ENCODE measurements at regions of chr16 and their contacts with region 1.

Region 1: GRCh38 chr16:46918861-46919792 is 35.0 kb downstream of the GPT2 start:
- DNase-seq: no peak
- H3K4me3 ChIP-seq: no peak overlapping the region
- H3K27ac ChIP-seq: no peak overlapping the region
- H3K4me1 ChIP-seq: no peaks in the 10 kb centered on the region
- H3K27me3 ChIP-seq: no peaks in the 10 kb centered on the region

Region 2: GRCh38 chr16:46929378-46930332 is 10.5 kb after region 1 on chr16:
- CTCF ChIA-PET with region 1: interaction called, 18 read pairs
- POLR2A ChIA-PET with region 1: no interaction called
- DNase-seq: peak; percentile 39 to 64 (median 55)
- H3K4me3 ChIP-seq: no peak overlapping the region
- H3K27ac ChIP-seq: no peak overlapping the region
- H3K4me1 ChIP-seq: peaks cover 0 to 12% (median 0%) of the 10 kb centered on the region in 4 experiments
- H3K27me3 ChIP-seq: no peaks in the 10 kb centered on the region